ENCODE measurements at regions of chr16 and their contacts with region 1.

Region 1: DNA sequence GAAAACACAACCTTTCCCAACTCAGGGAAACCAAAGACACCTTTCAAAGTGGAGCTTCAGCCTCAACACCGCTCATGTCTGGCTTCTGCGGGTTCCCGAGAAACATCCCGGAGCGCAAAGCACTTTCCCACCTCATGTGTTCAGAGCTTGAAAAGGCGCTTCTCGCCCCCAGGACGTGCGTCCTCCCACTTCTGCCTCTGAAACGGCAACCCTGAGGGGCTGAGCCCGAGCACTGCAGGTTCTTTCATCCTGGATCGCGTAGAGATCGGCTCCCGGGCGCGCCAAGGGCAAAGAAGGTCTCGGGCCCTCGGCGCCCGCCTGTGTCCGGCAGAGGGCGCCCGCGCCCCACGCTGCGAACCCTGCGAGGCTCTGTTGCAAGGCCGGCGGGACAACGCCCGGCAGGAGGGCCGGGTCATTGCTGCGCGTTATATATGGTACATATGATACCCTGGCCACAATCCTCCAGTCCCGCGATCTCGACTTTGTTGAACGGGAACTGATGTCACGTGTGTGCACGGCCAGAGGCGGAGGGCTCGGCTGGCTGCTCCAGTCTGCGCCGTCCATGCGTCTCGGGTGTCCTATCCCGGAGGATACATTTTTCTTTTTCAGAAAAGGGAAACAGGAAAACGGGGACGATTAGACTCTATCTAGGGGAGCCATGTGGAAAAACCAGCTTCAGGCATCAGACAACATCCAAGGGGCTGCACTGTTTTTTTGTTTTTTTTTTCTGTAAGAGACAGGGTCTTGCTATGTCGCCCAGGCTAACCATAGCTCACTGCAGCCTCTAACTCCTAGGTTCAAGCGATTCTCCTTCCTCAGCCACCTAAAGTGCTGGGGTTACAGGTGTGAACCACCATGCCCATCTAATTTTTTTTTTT is 19.1 kb downstream of the COQ7 start:
- DNase-seq: peak; percentile 83
- H3K4me3 Mint-ChIP-seq: peak overlapping the region; percentile 42
- H3K27ac Mint-ChIP-seq: no peak overlapping the region
- H3K4me1 Mint-ChIP-seq: no peaks in the 10 kb centered on the region
- H3K27me3 Mint-ChIP-seq: peaks cover 8% of the 10 kb centered on the region

Region 2: DNA sequence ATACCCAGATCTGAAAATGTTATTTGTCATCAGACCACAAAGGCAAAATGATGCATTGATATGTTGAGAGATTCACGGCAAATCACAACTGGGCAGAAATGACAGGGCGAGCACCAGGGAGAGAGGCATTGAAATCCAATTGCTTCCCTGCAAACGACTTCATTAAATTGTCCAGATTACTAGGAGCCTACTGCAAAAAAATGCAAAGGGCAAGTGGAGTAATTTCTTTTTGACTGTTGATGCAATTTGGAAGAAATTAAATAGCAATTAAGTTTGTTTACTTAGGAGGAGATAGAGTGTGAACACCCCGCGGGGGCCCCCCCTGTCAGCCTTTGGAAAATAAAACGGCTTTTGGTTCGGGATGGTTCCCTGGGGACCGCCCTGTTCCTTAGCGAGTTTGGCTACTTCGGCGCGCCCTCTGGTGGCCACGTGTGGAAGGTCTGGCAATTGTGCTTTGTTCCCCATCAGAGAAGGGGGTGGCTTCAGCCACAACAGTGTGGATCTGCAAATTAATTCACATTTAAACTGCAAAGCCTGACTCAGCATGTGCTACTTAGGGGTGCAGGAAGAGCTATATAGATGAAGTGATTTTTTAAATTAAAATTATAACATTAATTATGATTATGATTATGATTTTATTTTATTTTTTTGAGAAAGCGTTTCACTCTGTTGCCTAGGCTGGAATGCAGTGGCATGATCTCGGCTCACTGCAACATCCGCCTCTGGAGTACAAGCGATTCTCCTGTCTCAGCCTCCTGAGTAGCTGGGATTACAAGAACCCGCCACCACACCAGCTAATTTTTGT is 117.3 kb before region 1 on chr16:
- CTCF ChIA-PET with region 1: no interaction called
- POLR2A ChIA-PET with region 1: no interaction called
- intact Hi-C with region 1: no loop called
- DNase-seq: peak; percentile 86
- H3K4me3 Mint-ChIP-seq: peak overlapping the region; percentile 20
- H3K27ac Mint-ChIP-seq: no peak overlapping the region
- H3K4me1 Mint-ChIP-seq: peaks cover 6% of the 10 kb centered on the region
- H3K27me3 Mint-ChIP-seq: no peaks in the 10 kb centered on the region

Region 3: GRCh38 chr16:19113453-19114351 is 27.1 kb after region 1 on chr16 and contains the start of gene ITPRIPL2:
- CTCF ChIA-PET with region 1: interaction called, 16 read pairs
- POLR2A ChIA-PET with region 1: no interaction called
- intact Hi-C with region 1: no loop called
- DNase-seq: peak; percentile 31
- H3K4me3 Mint-ChIP-seq: peak within 1 kb of the TSS; percentile 69
- H3K27ac Mint-ChIP-seq: peak within 1 kb of the TSS; percentile 78
- H3K4me1 Mint-ChIP-seq: peaks cover 18% of the 10 kb centered on the region
- H3K27me3 Mint-ChIP-seq: peaks cover 21% of the 10 kb centered on the region
- total RNA-seq, gene ITPRIPL2: 8.9 to 9.7 TPM

Region 4: DNA sequence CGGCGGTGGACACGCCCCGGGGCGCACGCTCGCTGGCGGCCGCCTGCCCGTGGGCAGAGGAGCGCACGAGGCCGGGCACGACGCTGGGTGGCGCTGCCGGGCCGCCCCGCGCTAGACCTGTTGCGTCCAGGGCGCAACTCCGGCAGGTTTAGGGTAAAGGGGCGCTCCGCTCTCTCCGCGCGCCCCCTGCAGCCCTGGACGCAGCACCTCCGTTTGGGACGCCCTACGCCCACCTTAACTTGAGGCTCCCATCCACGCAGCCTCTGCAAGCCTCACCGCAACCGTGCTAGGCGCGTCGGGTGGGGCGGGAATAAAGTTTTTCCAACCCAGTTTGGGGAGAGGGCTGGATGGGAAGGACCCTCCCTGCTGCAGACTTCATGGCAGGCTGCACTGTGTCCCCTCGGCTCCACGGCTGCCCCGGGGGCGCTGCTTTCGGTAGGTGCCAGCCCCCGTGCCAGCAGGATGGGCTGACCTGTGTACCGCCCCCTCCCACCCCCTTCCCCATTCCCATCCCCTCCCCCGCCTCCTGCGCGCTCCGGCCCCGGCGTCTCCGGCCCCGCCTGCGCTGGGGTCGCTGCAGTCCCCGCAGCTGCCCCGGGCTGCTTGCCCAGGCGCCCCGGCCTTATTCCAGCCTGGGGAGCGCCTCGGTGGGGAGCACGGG is 81.3 kb after region 1 on chr16 and contains the start of gene SYT17:
- CTCF ChIA-PET with region 1: interaction called, 7 read pairs
- POLR2A ChIA-PET with region 1: no interaction called
- intact Hi-C with region 1: loop called (anchors 1 kb)
- DNase-seq: peak; percentile 65
- H3K4me3 Mint-ChIP-seq: no peak within 1 kb of the TSS
- H3K27ac Mint-ChIP-seq: no peak within 1 kb of the TSS
- H3K4me1 Mint-ChIP-seq: no peaks in the 10 kb centered on the region
- H3K27me3 Mint-ChIP-seq: peaks cover 24% of the 10 kb centered on the region
- total RNA-seq, gene SYT17: 0.10 TPM in 1 of 2 experiments, not detected in the other

Region 5: DNA sequence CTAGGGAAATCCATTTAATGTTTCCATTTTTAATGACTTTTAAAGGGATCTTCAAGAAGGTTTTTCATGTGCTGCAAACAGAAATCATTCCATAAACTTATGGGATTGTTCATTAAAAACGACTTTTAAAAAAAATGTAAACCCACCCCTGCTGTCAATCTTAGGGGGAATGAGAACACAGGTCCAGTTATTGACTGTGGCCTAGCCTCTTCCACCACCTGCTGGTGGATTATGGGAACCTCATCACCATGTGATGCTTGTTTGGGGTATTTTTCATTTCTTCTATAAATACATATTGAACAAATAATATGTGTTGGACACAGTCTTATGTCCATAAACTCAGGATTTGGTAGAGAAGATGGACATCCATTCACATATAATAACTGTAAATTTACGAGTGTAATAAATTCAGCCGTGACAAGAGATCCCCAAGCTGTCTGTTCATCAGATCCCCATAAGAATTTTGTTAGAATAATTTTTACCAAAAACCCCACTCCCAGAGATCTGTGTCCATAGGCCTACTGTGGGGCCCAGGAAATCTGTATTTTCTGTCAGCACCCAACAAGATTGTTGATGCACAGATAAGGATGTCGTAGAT is 289.1 kb after region 1 on chr16:
- CTCF ChIA-PET with region 1: interaction called, 40 read pairs
- POLR2A ChIA-PET with region 1: no interaction called
- intact Hi-C with region 1: loop called (anchors 1 kb)
- DNase-seq: peak; percentile 47
- H3K4me3 Mint-ChIP-seq: no peak overlapping the region
- H3K27ac Mint-ChIP-seq: no peak overlapping the region
- H3K4me1 Mint-ChIP-seq: peaks cover 8% of the 10 kb centered on the region
- H3K27me3 Mint-ChIP-seq: no peaks in the 10 kb centered on the region

Region 6: GRCh38 chr16:19886073-19886941 is 799.7 kb after region 1 on chr16:
- CTCF ChIA-PET with region 1: no interaction called
- POLR2A ChIA-PET with region 1: no interaction called
- intact Hi-C with region 1: loop called (anchors 10 kb)
- DNase-seq: peak; percentile 89
- H3K4me3 Mint-ChIP-seq: peak overlapping the region; percentile 57
- H3K27ac Mint-ChIP-seq: no peak overlapping the region
- H3K4me1 Mint-ChIP-seq: peaks cover 19% of the 10 kb centered on the region
- H3K27me3 Mint-ChIP-seq: peaks cover 32% of the 10 kb centered on the region